ENCODE measurements at regions of chr21 and their contacts with region 1.

Region 1: DNA sequence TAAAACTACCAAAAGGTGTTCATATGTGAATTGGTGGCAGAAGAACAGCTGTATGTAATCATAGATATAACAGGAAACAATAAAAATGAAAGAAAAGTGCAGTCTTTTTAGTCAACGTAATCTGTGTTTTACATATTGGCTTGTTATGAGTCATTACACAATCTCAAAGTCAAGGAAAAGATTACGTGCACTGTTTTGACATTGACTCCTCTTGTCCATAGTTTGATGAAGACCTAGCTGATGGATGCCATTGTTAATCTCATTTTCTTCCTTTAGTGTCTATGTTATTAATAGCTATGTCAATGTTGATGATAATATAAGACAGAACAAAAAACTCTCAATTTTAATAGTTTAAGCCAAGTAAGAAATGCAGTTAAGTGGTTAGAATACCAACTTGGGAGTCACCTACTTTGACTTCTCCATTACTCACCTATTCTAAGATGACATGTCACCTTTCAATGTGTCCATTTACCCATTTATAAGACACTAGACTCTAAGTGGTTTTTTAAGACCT is 84.5 kb upstream of the SAMSN1 start:
- DNase-seq: no peak
- H3K4me3 Mint-ChIP-seq: no peak overlapping the region
- H3K27ac Mint-ChIP-seq: peak overlapping the region; percentile 70
- H3K4me1 Mint-ChIP-seq: peaks cover 27% of the 10 kb centered on the region
- H3K27me3 Mint-ChIP-seq: no peaks in the 10 kb centered on the region

Region 2: GRCh38 chr21:14487490-14488432 is 142.9 kb before region 1 on chr21:
- CTCF ChIA-PET with region 1: no interaction called
- POLR2A ChIA-PET with region 1: no interaction called
- intact Hi-C with region 1: no loop called
- DNase-seq: no peak
- H3K4me3 Mint-ChIP-seq: no peak overlapping the region
- H3K27ac Mint-ChIP-seq: peak overlapping the region; percentile 75
- H3K4me1 Mint-ChIP-seq: peaks cover 59% of the 10 kb centered on the region
- H3K27me3 Mint-ChIP-seq: no peaks in the 10 kb centered on the region

Region 3: GRCh38 chr21:14523234-14523633 is 107.4 kb before region 1 on chr21:
- CTCF ChIA-PET with region 1: no interaction called
- POLR2A ChIA-PET with region 1: no interaction called
- intact Hi-C with region 1: loop called (anchors 1 kb)
- DNase-seq: peak; percentile 71
- H3K4me3 Mint-ChIP-seq: peak overlapping the region; percentile 59
- H3K27ac Mint-ChIP-seq: peak overlapping the region; percentile 72
- H3K4me1 Mint-ChIP-seq: peaks cover 65% of the 10 kb centered on the region
- H3K27me3 Mint-ChIP-seq: no peaks in the 10 kb centered on the region

Region 4: DNA sequence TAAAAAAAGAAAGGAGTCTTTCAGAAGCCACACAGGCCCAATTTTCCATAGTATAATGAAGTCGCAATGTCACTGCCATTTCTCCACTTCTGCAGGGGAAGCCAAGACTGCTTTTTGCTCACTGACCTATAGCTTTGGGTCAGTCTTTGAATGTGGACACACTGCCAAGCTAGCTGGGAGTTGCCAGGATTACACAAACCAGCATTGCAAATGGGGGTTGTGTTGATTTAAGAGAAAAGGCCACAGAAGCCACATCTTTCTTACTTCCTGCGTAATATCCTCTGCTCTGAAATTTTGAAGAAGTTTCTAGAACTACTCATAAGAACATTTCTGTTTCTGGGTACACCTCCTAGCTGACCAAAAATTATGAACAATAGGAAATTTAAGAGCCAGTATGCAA is 38.7 kb before region 1 on chr21:
- CTCF ChIA-PET with region 1: no interaction called
- POLR2A ChIA-PET with region 1: no interaction called
- intact Hi-C with region 1: loop called (anchors 1 kb)
- DNase-seq: no peak
- H3K4me3 Mint-ChIP-seq: no peak overlapping the region
- H3K27ac Mint-ChIP-seq: peak overlapping the region; percentile 23
- H3K4me1 Mint-ChIP-seq: peaks cover 21% of the 10 kb centered on the region
- H3K27me3 Mint-ChIP-seq: no peaks in the 10 kb centered on the region

Region 5: DNA sequence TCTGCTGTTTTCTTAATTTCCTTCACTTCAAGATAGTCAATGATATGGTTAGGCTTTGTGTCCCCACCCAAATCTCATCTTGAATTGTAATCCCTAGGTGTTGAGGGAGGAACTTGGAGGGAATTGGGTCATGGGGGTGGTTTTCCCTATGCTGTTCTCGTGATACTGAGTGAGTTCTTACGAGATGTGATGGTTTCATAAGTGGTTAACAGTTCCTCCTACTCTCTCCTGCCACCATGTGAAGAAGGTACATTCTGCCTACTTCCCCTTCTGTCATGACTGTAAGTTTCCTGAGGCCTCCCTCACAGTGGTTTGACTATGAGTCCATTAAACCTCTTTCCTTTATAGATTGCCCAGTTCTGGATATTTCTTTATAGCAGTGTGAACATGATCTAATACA is 10.5 kb before region 1 on chr21:
- CTCF ChIA-PET with region 1: no interaction called
- POLR2A ChIA-PET with region 1: no interaction called
- intact Hi-C with region 1: no loop called
- DNase-seq: no peak
- H3K4me3 Mint-ChIP-seq: no peak overlapping the region
- H3K27ac Mint-ChIP-seq: no peak overlapping the region
- H3K4me1 Mint-ChIP-seq: peaks cover 23% of the 10 kb centered on the region
- H3K27me3 Mint-ChIP-seq: no peaks in the 10 kb centered on the region

Region 6: DNA sequence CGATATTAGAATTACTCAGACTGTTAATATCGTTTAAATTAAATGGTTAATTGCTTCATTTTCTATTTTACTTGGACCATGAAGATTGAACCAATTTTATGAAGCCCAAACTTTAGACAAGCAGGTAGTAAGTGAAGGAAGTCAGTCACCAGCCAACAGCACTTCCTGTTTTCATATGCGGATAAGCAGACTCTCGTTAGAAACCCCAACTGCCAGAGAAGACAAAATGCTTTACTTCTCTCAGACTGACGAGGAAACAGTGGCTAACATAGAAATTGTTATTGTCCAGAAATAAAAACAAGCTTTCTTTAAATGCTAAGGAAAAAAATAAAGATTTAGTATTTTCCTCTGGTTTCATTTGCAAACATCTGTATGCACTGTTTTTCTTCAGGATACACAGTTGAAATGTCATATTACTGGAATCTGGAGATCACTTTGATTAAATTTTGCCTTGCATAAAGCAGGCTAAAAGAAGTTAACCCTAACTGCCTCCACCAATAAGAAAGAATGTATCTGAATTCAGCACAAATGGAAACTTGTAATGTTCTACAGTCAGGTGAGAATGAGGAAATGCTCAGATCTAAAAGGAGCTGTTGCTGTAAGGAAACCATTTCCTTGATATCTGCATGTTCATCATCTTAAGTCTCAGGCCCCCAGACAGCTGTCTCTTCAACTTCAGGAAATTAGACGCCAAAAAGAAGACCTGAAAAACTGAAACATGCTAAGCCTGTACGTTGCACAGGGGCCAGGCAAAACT is 45.3 kb after region 1 on chr21:
- CTCF ChIA-PET with region 1: no interaction called
- POLR2A ChIA-PET with region 1: interaction called, 4 read pairs
- intact Hi-C with region 1: loop called (anchors 2 kb)
- DNase-seq: no peak
- H3K4me3 Mint-ChIP-seq: peak overlapping the region; percentile 64
- H3K27ac Mint-ChIP-seq: peak overlapping the region; percentile 94
- H3K4me1 Mint-ChIP-seq: peaks cover 32% of the 10 kb centered on the region
- H3K27me3 Mint-ChIP-seq: no peaks in the 10 kb centered on the region

Region 7: GRCh38 chr21:15343066-15343465 is 712.5 kb after region 1 on chr21:
- CTCF ChIA-PET with region 1: no interaction called
- POLR2A ChIA-PET with region 1: no interaction called
- intact Hi-C with region 1: no loop called
- DNase-seq: no peak
- H3K4me3 Mint-ChIP-seq: no peak overlapping the region
- H3K27ac Mint-ChIP-seq: no peak overlapping the region
- H3K4me1 Mint-ChIP-seq: no peaks in the 10 kb centered on the region
- H3K27me3 Mint-ChIP-seq: peaks cover 19% of the 10 kb centered on the region